Right ventricle myocardium inferior (tissue), 1 donor: ENCODE measurements at regions of chrX and their contacts with region 1.

Region 1: DNA sequence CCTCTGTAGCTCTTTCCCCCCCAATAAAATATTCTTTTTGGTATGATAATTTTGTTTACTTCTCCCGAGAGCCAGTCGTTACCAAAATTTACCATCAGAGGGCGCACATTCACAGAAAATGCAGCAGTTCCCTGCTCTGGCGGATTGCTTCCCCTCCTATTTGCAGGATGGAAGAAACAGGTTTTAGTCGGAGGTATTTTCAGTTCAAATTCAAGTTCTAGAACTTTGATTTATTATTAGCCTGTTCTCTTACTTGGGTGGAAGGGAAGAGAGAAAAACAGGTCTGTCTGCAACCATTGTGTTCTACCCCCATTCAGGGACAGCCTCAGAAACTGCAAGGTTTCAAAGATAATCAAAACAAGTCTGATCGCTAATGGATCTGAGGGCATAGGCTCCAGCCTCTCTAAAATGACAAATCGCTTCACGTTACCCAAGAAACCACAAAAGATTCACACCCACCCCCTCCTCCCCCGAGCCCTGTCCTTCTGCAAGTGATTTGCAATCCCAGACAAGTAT is 263.8 kb upstream of the RPS6KA3 start:
- DNase-seq: no peak
- ATAC-seq: no peak

Region 2: GRCh38 chrX:20382518-20383297 is 147.8 kb before region 1 on chrX:
- intact Hi-C with region 1: no loop called
- DNase-seq: no peak
- ATAC-seq: peak; percentile 83

Region 3: GRCh38 chrX:20653070-20653469 is 122.6 kb after region 1 on chrX:
- intact Hi-C with region 1: no loop called
- DNase-seq: no peak
- ATAC-seq: no peak

Region 4: DNA sequence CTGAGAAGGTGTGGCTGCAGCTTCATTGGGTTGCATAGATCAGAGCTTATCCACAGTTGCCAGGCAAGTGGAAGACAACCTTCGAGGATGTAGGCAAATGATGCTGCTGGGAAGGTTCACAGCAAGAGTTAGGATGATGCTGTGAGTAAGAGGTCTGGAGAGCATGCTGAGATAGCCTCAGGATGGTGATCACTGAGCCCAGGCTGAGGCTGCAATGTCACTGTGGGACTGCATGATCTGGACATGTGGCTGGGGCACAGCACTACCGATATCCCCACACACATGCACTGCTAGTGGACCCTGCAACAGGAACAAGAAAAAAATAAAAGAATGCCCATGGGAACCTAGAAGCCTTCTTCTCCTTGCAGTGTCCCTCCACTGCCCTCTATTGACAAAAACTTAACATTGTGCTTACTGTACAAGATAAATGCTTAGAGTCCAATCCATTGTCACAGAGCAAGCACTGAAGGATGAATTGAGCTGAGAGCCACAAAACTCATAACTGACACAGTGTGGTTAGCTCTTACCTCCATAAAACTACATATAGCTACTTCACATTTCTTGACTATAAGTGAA is 949.3 kb after region 1 on chrX:
- intact Hi-C with region 1: loop called (anchors 5 kb)
- DNase-seq: no peak
- ATAC-seq: no peak

Region 5: GRCh38 chrX:21745756-21746155 is 1215.3 kb after region 1 on chrX:
- intact Hi-C with region 1: loop called (anchors 10 kb)
- DNase-seq: no peak
- ATAC-seq: no peak

Region 6: GRCh38 chrX:21972721-21973120 is 1442.3 kb after region 1 on chrX:
- intact Hi-C with region 1: loop called (anchors 10 kb)
- DNase-seq: no peak
- ATAC-seq: peak; percentile 57